Adrenal gland (tissue), 19 donors: ENCODE measurements at regions of chr5 and their contacts with region 1.

Region 1: GRCh38 chr5:58460732-58461286 is 923 bp upstream of the PLK2 start:
- DNase-seq: peak; percentile 86 to 97 (median 93)
- H3K4me3 ChIP-seq: peak overlapping the region in 2 of 4 donors; percentile 63 to 85
- H3K27ac ChIP-seq: peak overlapping the region; percentile 80 to 95 (median 92)
- H3K4me1 ChIP-seq: peaks cover 0 to 10% of the 10 kb centered on the region in 2 donors
- H3K27me3 ChIP-seq: no peaks in the 10 kb centered on the region
- CTCF ChIP-seq: peak; percentile 58 to 88 (median 74)
- POLR2A ChIP-seq: no peak

Region 2: DNA sequence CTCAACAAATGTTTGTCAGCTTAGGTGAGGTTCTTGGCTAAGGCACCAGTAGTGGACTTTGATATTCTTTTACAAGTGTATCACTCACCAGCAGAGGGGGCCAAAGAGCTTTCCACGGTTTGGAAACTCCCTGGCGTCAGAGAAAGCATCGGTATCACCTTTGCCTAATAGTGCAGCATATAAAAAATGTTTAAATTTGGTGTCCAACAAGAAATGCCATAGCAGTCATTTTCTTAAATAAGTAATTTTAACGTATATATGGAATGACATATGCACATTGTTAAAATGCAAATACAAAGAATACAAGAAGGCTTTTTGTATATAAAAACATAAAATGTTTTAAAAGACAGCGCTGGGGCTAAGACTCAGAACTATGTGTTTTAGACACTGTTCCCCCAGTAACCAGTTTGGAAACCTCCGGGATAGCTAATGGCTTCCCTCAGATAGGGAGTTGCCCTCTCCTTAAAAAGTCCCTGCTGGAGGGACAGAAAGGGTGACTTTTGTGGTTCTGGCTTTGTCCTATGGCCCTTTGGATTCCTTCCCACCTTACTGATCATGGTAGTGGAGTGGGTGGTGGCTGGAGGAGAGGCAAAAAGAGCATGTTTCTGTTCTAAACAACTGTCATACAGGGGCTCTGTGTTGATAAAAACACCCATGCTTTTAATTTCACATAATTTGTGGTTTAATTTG is 1162.4 kb before region 1 on chr5:
- intact Hi-C with region 1: loop called (anchors 5 kb)
- DNase-seq: peak; percentile 77 to 94 (median 89)
- H3K4me3 ChIP-seq: peak overlapping the region in 1 of 4 donors; percentile 12
- H3K27ac ChIP-seq: no peak overlapping the region
- H3K4me1 ChIP-seq: peaks cover 0 to 6% of the 10 kb centered on the region in 2 donors
- H3K27me3 ChIP-seq: no peaks in the 10 kb centered on the region
- CTCF ChIP-seq: peak; percentile 67 to 90 (median 75)
- POLR2A ChIP-seq: no peak

Region 3: GRCh38 chr5:57499262-57500050 is 961.4 kb before region 1 on chr5:
- intact Hi-C with region 1: loop called (anchors 5 to 10 kb)
- DNase-seq: peak in 1 of 7 donors; percentile 11
- H3K4me3 ChIP-seq: peak overlapping the region in 1 of 4 donors; percentile 33
- H3K27ac ChIP-seq: no peak overlapping the region
- H3K4me1 ChIP-seq: peaks cover 7 to 46% of the 10 kb centered on the region in 2 donors
- H3K27me3 ChIP-seq: no peaks in the 10 kb centered on the region
- CTCF ChIP-seq: peak; percentile 44 to 79 (median 68)
- POLR2A ChIP-seq: no peak

Region 4: GRCh38 chr5:57650360-57651069 is 810.3 kb before region 1 on chr5:
- intact Hi-C with region 1: loop called in 1 of 2 experiments (anchors 5 kb)
- DNase-seq: peak; percentile 30 to 77 (median 60)
- H3K4me3 ChIP-seq: no peak overlapping the region
- H3K27ac ChIP-seq: no peak overlapping the region
- H3K4me1 ChIP-seq: no peaks in the 10 kb centered on the region
- H3K27me3 ChIP-seq: no peaks in the 10 kb centered on the region
- CTCF ChIP-seq: peak; percentile 48 to 80 (median 75)
- POLR2A ChIP-seq: no peak

Region 5: GRCh38 chr5:57779383-57780223 is 681.2 kb before region 1 on chr5:
- intact Hi-C with region 1: loop called (anchors 2 to 5 kb)
- DNase-seq: peak; percentile 18 to 73 (median 43)
- H3K4me3 ChIP-seq: no peak overlapping the region
- H3K27ac ChIP-seq: no peak overlapping the region
- H3K4me1 ChIP-seq: peaks cover 0 to 14% of the 10 kb centered on the region in 2 donors
- H3K27me3 ChIP-seq: no peaks in the 10 kb centered on the region
- CTCF ChIP-seq: peak; percentile 19 to 68 (median 59)
- POLR2A ChIP-seq: no peak

Region 6: DNA sequence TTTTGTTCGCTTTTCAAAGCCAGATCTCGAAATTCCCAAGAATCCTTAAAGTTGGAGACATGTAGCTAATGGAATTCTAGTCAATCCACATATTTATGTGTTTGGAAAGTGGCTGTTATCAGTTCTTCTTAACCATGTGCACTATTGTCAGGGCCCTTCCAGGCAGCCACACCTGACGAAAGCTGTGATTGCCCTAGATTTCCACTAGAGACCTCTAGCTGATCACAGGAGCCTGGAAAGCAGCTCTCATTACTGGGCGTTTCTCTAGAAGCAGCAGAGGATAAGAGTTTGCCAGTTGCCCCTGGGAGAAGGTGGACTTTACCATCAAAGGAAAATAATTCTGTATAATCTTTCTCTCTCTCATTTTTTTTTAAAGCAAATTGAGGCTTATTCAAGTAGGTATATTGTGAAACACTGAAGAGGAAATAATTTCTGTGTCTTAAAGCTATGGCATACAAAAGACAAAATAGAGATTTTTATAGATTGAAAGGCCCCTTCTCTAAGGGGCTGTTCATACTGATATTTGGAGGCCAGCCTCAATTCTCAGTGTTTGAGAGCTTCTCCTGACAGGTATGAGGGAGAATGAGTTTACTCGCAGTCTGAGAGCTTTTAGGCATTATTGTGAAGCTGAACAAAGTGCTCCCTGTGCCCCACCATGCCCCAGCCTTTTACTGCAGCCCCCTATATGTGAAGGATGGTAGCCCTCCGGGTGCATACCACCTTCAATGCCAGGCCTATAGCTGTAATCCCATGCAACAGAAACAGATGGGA is 572.8 kb before region 1 on chr5:
- intact Hi-C with region 1: loop called in 1 of 2 experiments (anchors 10 kb)
- DNase-seq: peak; percentile 26 to 76 (median 37)
- H3K4me3 ChIP-seq: no peak overlapping the region
- H3K27ac ChIP-seq: no peak overlapping the region
- H3K4me1 ChIP-seq: no peaks in the 10 kb centered on the region
- H3K27me3 ChIP-seq: no peaks in the 10 kb centered on the region
- CTCF ChIP-seq: peak in 5 of 6 experiments; percentile 23 to 55 (median 45)
- POLR2A ChIP-seq: no peak

Region 7: GRCh38 chr5:58958701-58959100 is 497.9 kb after region 1 on chr5:
- intact Hi-C with region 1: no loop called
- DNase-seq: no peak
- H3K4me3 ChIP-seq: no peak overlapping the region
- H3K27ac ChIP-seq: no peak overlapping the region
- H3K4me1 ChIP-seq: no peaks in the 10 kb centered on the region
- H3K27me3 ChIP-seq: no peaks in the 10 kb centered on the region
- CTCF ChIP-seq: no peak
- POLR2A ChIP-seq: no peak